ENCODE measurements at regions of chr6 and their contacts with region 1.

Region 1: DNA sequence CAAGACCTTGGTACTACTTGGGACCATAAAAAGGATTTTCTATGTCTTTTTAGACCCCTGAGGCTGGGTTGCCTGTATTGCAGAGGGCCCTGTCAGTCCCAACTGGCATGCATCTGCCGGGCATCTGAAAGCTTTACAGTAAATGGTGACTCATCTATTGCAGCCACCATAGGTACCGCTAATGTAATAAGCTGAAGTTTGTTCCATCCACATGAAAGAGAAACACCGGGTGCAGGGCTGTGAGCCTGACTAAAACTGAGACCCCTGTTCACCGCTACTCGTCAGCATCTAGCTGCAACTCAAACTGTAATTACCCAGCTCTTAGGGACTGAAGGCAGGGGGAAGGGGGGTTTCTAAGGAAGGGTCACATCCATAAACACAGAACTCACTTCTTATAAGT is 49.5 kb downstream of the TRERF1 start:
- DNase-seq: peak; percentile 82
- H3K4me3 Mint-ChIP-seq: peak overlapping the region; percentile 70
- H3K27ac Mint-ChIP-seq: peak overlapping the region; percentile 74
- H3K4me1 Mint-ChIP-seq: peaks cover 63% of the 10 kb centered on the region
- H3K27me3 Mint-ChIP-seq: no peaks in the 10 kb centered on the region
- CTCF ChIP-seq: no peak

Region 2: DNA sequence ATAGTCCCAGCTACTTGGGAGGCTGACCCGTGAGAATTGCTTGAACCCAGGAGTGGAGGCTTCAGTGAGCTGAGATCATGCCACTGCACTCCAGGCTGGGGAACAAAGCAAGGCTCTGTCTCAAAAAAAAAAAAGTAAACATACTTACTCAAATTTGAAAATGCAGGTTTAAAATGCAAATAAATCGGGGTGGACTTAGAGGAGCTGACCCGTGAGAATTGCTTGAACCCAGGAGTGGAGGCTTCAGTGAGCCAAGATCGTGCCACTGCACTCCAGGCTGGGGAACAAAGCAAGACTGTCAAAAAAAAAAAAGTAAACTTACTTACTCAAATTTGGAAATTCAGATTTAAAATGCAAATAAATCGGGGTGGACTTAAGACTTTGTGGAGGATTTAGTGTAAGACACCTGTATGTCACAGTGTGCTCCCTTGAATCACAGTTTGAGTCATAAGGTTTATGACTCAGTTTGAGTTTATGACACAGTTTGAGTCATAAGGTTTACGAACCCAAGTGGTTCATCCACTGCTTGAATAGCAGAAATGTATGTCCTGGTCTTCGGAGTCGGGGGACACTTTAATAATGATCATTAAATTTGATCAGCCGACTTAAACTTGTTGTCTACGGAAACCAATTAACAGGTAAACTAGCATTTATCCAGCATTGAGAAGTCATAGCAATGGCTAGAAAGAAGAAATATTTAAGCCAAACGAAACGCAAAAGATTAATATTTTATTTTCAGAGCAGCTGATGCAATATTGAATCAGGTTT is 177.8 kb before region 1 on chr6:
- CTCF ChIA-PET with region 1: interaction called, 6 read pairs
- POLR2A ChIA-PET with region 1: interaction called, 43 read pairs
- intact Hi-C with region 1: loop called (anchors 5 kb)
- DNase-seq: peak; percentile 93
- H3K4me3 Mint-ChIP-seq: peak overlapping the region; percentile 73
- H3K27ac Mint-ChIP-seq: peak overlapping the region; percentile 92
- H3K4me1 Mint-ChIP-seq: peaks cover 44% of the 10 kb centered on the region
- H3K27me3 Mint-ChIP-seq: no peaks in the 10 kb centered on the region
- CTCF ChIP-seq: no peak

Region 3: DNA sequence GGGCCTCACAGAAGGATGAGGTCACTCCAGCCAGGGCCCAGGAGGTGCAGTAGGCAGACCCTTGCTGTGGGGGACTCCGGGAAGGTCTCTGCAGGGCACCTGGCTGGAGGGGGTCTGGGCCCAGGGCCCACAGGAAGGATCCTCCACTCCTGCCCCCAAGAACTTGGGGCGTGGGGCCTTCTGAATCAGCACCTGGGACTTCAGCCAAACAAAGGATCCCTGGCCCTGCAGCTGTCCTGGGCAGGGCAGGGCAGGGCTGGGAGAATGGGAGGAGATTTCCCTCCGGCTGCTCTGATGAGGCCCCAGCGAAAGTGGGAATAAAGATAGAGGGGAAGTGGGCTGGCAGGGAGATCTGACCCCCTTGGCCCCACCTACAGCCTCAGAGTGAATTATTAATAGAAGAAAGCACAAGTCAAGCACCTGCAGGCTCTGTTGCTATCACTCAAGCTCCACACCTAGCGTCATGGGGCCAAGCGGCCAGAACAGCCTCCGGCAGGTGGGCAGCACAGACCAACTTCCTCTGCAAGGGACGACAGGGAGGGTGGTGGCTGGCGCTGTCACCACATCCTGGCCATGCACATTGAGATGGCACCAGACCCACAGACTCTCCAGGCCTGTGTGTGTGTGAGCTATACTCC is 122.9 kb before region 1 on chr6:
- CTCF ChIA-PET with region 1: interaction called, 4 read pairs
- POLR2A ChIA-PET with region 1: interaction called, 29 read pairs
- intact Hi-C with region 1: loop called (anchors 2 kb)
- DNase-seq: peak; percentile 90
- H3K4me3 Mint-ChIP-seq: peak overlapping the region; percentile 52
- H3K27ac Mint-ChIP-seq: peak overlapping the region; percentile 70
- H3K4me1 Mint-ChIP-seq: peaks cover 34% of the 10 kb centered on the region
- H3K27me3 Mint-ChIP-seq: no peaks in the 10 kb centered on the region
- CTCF ChIP-seq: no peak

Region 4: GRCh38 chr6:42338663-42339218 is 63.4 kb before region 1 on chr6:
- CTCF ChIA-PET with region 1: interaction called, 3 read pairs
- POLR2A ChIA-PET with region 1: interaction called, 38 read pairs
- intact Hi-C with region 1: loop called (anchors 1 kb)
- DNase-seq: peak; percentile 97
- H3K4me3 Mint-ChIP-seq: peak overlapping the region; percentile 61
- H3K27ac Mint-ChIP-seq: peak overlapping the region; percentile 55
- H3K4me1 Mint-ChIP-seq: peaks cover 52% of the 10 kb centered on the region
- H3K27me3 Mint-ChIP-seq: no peaks in the 10 kb centered on the region
- CTCF ChIP-seq: no peak

Region 5: DNA sequence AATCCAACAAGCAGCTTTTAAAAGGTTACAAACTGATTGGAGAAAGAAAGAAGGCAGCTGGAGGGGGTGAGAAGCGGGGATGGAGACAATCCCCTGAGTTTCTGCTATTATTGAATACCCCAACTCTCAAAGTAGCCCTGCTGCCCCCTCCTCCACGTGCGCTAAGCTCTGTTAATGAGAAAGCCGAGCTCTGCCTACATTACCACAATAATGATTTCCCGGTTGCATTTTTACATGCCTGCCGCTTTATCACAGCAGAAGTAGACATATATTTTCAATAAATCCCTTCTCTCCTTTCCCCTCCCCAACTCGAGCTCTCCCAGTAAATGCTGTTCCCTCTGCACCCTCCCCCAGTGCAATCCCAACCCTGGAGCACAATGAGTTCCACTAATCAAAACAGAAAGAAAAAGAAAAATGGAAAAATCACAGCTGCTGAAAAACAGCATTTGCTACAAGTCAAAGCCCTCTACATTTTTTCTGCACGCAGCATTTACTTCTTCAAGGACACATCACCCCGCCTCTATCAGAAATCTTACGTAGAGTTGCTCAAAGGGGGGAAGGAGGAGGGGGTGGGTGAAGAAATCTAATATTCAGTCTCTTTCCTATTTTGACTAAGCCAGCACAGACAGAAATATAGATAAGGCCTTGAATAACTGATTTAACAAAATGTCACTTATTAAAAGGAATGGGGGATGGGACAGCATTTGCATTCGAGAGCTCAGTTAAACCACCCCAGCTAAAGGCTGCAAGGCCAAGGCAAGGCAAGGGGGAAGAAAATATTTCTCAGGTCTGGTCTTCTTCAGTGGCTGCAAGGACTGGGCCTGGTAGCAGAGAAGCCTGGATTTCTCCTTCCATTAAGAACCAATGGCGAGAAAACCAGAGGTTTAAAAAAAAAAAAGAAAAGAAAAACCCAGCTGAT is 38.9 kb after region 1 on chr6:
- CTCF ChIA-PET with region 1: interaction called, 21 read pairs
- POLR2A ChIA-PET with region 1: interaction called, 3 read pairs
- intact Hi-C with region 1: no loop called
- DNase-seq: no peak
- H3K4me3 Mint-ChIP-seq: no peak overlapping the region
- H3K27ac Mint-ChIP-seq: peak overlapping the region; percentile 51
- H3K4me1 Mint-ChIP-seq: peaks cover 15% of the 10 kb centered on the region
- H3K27me3 Mint-ChIP-seq: no peaks in the 10 kb centered on the region
- CTCF ChIP-seq: no peak

Region 6: GRCh38 chr6:42532038-42532669 is 130.0 kb after region 1 on chr6:
- CTCF ChIA-PET with region 1: interaction called, 23 read pairs
- POLR2A ChIA-PET with region 1: interaction called, 15 read pairs
- intact Hi-C with region 1: loop called (anchors 1 kb)
- DNase-seq: peak; percentile 74
- H3K4me3 Mint-ChIP-seq: no peak overlapping the region
- H3K27ac Mint-ChIP-seq: no peak overlapping the region
- H3K4me1 Mint-ChIP-seq: no peaks in the 10 kb centered on the region
- H3K27me3 Mint-ChIP-seq: no peaks in the 10 kb centered on the region
- CTCF ChIP-seq: peak; percentile 79

Region 7: DNA sequence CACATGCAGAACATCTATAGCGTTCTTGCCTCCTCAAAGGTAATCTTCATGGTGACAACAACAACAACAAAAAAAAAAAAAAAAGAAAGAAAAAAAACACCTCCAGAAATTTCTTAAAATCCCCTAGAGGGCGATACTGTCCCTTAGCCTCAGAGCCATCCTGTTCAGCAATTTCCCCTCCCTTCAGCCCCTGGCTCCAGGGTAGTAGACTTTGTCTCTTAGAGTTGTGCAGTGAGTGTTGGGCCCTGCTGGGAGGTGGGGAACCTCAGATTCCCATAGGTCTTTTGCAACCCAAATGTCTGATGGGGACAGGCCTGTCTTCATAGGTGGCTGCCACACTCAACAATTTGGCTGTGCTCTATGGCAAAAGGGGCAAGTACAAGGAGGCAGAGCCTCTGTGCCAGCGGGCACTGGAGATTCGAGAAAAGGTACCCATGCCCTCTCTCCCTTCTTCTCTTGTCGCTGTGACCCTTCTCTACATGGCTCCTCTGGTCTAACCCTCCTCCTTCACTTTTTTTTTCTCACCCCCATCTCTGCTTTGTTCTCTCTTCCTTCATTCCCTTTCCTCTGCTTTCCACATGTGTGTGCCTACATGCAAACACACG is 667.9 kb after region 1 on chr6:
- CTCF ChIA-PET with region 1: no interaction called
- POLR2A ChIA-PET with region 1: no interaction called
- intact Hi-C with region 1: no loop called
- DNase-seq: peak; percentile 65
- H3K4me3 Mint-ChIP-seq: no peak overlapping the region
- H3K27ac Mint-ChIP-seq: peak overlapping the region; percentile 75
- H3K4me1 Mint-ChIP-seq: no peaks in the 10 kb centered on the region
- H3K27me3 Mint-ChIP-seq: no peaks in the 10 kb centered on the region
- CTCF ChIP-seq: peak; percentile 62

Measured in MCF 10A (cell line).